ENCODE measurements at regions of chr1 and their contacts with region 1.

Region 1: GRCh38 chr1:110034451-110035235 is at the start of gene STRIP1:
- DNase-seq: peak; percentile 95
- H3K4me3 ChIP-seq: peak within 1 kb of the TSS; percentile 81
- H3K27ac ChIP-seq: peak within 1 kb of the TSS; percentile 54
- H3K27me3 ChIP-seq: no peaks in the 10 kb centered on the region
- CTCF ChIP-seq: no peak
- polyA plus RNA-seq, gene STRIP1: 31.3 and 36.2 TPM in 2 replicates

Region 2: DNA sequence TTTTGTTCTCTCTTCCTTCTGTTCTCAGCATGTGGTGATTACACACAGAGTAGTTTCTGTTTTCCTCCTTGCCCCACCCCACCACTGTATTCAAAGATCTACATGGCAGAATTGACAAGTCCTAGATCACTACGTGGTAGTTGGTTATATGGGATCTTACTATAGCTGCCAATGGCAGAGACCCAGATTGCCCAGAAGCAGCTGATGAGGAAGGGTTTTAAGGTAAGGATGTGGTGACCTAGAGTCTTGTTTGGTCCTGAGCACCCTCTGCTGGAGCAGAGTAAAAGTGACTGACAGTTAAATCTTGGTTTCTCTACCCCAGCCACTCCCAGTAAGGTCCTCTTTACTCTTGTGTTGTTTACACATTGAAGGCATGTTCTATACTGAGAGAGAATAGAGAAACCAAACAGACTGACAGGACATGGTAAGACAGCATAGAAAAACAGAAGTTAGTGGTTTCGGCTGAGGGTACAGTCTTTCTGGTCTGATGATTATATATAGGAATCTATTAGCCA is 23.1 kb before region 1 on chr1:
- CTCF ChIA-PET with region 1: interaction called, 54 read pairs
- POLR2A ChIA-PET with region 1: no interaction called
- DNase-seq: peak; percentile 34
- H3K4me3 ChIP-seq: no peak overlapping the region
- H3K27ac ChIP-seq: no peak overlapping the region
- H3K27me3 ChIP-seq: no peaks in the 10 kb centered on the region
- CTCF ChIP-seq: peak; percentile 69

Region 3: DNA sequence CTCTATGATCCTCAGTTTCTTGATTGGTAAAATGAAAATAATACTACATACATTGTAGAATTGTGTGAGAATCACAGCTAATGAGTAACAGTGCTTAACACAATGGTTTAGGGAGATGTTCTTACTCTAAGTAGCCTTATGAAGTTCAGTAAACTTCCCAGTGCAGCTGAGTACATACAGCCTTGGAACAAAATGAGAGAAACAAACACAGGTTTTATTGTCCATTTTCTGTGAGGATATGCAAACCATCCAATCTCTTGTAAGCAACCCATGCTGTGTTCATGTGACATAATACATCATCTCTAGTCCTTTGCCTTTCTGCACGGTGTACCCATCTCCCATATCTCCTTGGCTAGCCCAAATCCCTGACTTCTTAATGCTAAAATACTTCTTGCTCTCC is 14.9 kb before region 1 on chr1:
- CTCF ChIA-PET with region 1: interaction called, 54 read pairs
- POLR2A ChIA-PET with region 1: interaction called, 6 read pairs
- DNase-seq: no peak
- H3K4me3 ChIP-seq: no peak overlapping the region
- H3K27ac ChIP-seq: no peak overlapping the region
- H3K27me3 ChIP-seq: no peaks in the 10 kb centered on the region
- CTCF ChIP-seq: no peak

Region 4: GRCh38 chr1:110060034-110060661 is 25.5 kb after region 1 on chr1:
- CTCF ChIA-PET with region 1: interaction called, 16 read pairs
- POLR2A ChIA-PET with region 1: interaction called, 4 read pairs
- DNase-seq: no peak
- H3K4me3 ChIP-seq: no peak overlapping the region
- H3K27ac ChIP-seq: no peak overlapping the region
- H3K27me3 ChIP-seq: no peaks in the 10 kb centered on the region
- CTCF ChIP-seq: peak; percentile 73

Region 5: DNA sequence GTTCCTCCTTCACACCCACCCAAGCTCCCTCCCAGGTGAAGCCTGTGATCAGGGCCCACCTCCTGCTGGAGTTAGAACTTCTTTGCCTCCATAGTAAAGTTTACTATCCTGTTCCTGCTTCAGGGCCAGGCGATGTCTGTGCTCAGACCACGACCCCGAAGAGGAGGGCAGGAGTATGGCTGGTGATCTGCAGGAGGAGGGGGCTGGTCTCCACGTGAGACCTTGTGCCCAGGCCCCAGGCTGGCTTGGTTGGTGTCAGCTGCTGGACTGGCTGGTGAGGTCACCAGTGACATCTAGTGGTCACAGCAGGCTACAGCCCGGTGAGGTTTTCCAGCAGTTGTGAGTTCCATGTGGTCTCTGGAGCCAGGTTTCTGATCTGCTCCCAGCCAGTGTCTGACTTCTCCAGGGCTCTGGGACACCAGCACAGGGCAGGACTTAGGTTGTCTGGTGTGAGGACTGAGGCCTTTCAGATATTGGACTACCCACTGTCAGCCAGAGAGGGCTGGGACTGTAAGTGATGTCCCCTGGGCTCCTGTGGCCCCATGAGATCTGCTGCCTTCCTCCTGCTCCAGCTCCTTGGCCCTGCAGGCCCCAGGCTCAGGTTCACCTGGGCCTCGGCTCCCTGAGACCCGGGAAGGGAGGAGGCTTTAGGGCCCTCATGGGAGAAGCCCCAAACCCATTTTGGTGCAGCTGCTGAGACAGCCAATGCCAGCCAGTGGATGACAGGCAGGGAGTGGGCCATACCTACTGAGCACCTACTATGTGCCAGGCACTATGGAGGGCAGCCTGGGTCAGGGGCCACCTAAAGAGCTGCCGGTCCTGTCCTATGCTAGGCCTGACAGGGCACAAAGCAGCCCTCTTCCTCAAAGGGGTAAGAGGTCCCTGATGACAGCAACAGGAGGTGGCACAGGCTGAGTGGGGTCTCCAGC is 71.6 kb after region 1 on chr1:
- CTCF ChIA-PET with region 1: interaction called, 21 read pairs
- POLR2A ChIA-PET with region 1: no interaction called
- DNase-seq: peak; percentile 43
- H3K4me3 ChIP-seq: no peak overlapping the region
- H3K27ac ChIP-seq: no peak overlapping the region
- H3K27me3 ChIP-seq: peaks cover 40% of the 10 kb centered on the region
- CTCF ChIP-seq: peak; percentile 98

Region 6: DNA sequence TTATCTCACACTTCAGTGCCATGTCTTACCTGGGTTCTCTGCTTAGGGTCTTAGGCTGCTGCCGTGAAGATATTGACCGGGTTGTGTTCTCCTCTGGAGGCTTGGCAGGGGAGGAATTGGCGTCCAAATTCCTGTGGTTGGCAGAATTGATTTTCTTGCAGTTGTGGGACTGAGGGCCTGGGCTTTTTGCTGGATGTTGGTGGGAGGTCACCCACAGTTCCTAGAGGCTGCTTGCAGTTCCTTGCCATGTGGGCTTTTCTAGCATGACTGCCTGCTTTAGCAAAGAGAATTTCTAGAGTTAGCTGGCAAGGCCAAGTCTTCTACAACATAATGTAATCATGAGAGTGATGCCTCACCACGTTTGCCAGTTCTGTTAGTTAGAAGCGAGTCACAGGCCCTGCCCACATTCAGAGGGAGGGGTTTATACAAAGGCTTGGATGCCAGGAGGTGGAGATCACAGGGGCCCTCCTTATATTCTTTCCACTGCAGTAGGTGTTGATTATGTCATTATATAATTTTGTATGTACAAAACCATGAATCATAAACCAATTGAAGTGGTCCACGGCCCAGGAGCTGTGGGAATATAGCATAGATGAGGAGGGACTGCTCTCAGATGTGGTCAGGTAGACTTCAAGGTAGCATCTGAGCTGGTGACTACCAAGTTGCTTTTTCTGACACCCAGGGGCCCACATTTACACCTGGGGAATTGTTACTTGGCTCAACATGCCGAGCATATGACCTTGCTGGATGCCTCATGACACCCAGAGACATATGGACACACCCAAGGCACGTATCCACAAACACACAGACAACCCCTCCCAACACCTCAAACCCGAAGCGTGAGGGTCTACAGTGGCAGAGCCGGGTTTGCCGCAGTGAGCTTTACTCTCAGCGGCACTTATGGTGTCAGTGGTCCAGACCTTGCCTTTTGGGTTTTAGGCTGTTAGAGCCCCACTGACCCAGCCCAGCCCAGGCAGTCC is 84.3 kb after region 1 on chr1:
- CTCF ChIA-PET with region 1: interaction called, 11 read pairs
- POLR2A ChIA-PET with region 1: no interaction called
- DNase-seq: no peak
- H3K4me3 ChIP-seq: no peak overlapping the region
- H3K27ac ChIP-seq: no peak overlapping the region
- H3K27me3 ChIP-seq: peaks cover 23% of the 10 kb centered on the region
- CTCF ChIP-seq: no peak

Region 7: GRCh38 chr1:110292031-110292741 is 257.5 kb after region 1 on chr1:
- CTCF ChIA-PET with region 1: no interaction called
- POLR2A ChIA-PET with region 1: no interaction called
- DNase-seq: no peak
- H3K4me3 ChIP-seq: no peak overlapping the region
- H3K27ac ChIP-seq: no peak overlapping the region
- H3K27me3 ChIP-seq: no peaks in the 10 kb centered on the region
- CTCF ChIP-seq: no peak

Measured in AG04450 (cell line).